ENCODE measurements at regions of chrX and their contacts with region 1.

Region 1: GRCh38 chrX:22389556-22390179 is 117.0 kb downstream of the CBLL2 start:
- DNase-seq: no peak
- ATAC-seq: no peak
- H3K4me3 ChIP-seq: no peak overlapping the region
- H3K27ac ChIP-seq: no peak overlapping the region
- H3K4me1 ChIP-seq: no peaks in the 10 kb centered on the region
- H3K27me3 ChIP-seq: no peaks in the 10 kb centered on the region
- CTCF ChIP-seq: no peak
- EP300 ChIP-seq: no peak
- POLR2A ChIP-seq: no peak
- RAD21 ChIP-seq: no peak

Region 2: GRCh38 chrX:22406201-22406737 is 16.6 kb after region 1 on chrX:
- CTCF ChIA-PET with region 1: no interaction called
- POLR2A ChIA-PET with region 1: no interaction called
- in situ Hi-C with region 1: no loop called
- intact Hi-C with region 1: no loop called
- DNase-seq: no peak
- ATAC-seq: no peak
- H3K4me3 ChIP-seq: no peak overlapping the region
- H3K27ac ChIP-seq: no peak overlapping the region
- H3K4me1 ChIP-seq: no peaks in the 10 kb centered on the region
- H3K27me3 ChIP-seq: no peaks in the 10 kb centered on the region
- CTCF ChIP-seq: no peak
- EP300 ChIP-seq: no peak
- POLR2A ChIP-seq: no peak
- RAD21 ChIP-seq: no peak

Region 3: DNA sequence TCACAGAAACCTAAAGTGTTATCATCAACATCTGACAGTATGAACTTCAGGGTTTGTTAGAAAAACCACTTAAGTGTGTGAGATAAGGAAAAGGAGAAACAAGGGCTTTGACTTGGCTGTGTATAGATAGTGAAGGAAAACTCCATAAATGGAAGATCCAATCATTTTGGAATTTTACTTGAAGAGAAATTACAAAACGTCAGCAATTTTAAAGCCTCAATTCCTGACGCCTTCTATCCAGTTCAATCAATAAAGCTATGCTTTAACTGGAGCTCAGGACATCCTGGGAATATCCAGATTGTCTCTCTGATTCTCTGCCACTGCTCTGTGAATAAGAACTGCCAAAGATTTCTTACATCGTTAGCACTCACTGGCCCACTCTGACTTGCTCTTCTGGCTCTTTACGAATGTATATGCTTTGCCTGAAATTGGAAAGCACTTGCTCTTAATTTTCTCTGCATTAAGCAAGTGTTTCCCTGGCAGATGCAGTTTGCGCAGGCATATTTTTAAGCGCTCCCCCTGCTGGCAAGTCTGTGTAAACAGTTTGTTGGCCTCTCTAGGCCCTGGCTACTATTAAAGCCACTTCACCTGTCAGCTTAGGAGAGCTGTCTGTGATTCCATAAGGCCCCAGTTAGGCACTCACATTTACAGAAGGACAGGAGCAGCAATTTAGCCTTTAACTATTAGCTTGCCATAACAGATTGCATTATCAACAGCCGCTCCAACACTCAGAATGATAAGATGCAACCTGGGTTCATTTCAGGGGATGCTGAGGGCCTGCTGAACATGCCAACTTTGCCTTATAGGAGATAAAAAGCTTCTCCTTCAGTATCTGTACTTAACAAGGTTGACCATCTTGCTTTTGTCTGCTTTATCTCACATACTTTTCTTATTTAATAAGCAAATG is 358.7 kb after region 1 on chrX:
- CTCF ChIA-PET with region 1: no interaction called
- POLR2A ChIA-PET with region 1: no interaction called
- in situ Hi-C with region 1: no loop called
- intact Hi-C with region 1: loop called (anchors 10 kb)
- DNase-seq: peak; percentile 13
- ATAC-seq: peak; percentile 81
- H3K4me3 ChIP-seq: no peak overlapping the region
- H3K27ac ChIP-seq: no peak overlapping the region
- H3K4me1 ChIP-seq: no peaks in the 10 kb centered on the region
- H3K27me3 ChIP-seq: no peaks in the 10 kb centered on the region
- CTCF ChIP-seq: peak; percentile 63
- EP300 ChIP-seq: no peak
- POLR2A ChIP-seq: no peak
- RAD21 ChIP-seq: no peak

Measured in HepG2 (cell line).